B cell (primary cell): ENCODE measurements at regions of chr12 and their contacts with region 1.

Region 1: GRCh38 chr12:67441736-67442346 is 172.7 kb downstream of the CAND1 start:
- DNase-seq: peak; percentile 76
- ATAC-seq: peak; percentile 88
- H3K4me3 ChIP-seq: no peak overlapping the region
- H3K4me3 Mint-ChIP-seq: peak overlapping the region; percentile 18
- H3K27ac ChIP-seq: no peak overlapping the region
- H3K27ac Mint-ChIP-seq: no peak overlapping the region
- H3K4me1 ChIP-seq: peaks cover 7 to 8% of the 10 kb centered on the region in 2 donors
- H3K4me1 Mint-ChIP-seq: peaks cover 8% of the 10 kb centered on the region
- H3K27me3 ChIP-seq: no peaks in the 10 kb centered on the region
- H3K27me3 Mint-ChIP-seq: no peaks in the 10 kb centered on the region
- CTCF ChIP-seq: peak; percentile 83

Region 2: GRCh38 chr12:67268896-67269631 is 172.8 kb before region 1 on chr12 and contains the start of gene CAND1:
- CTCF ChIA-PET with region 1: no interaction called
- POLR2A ChIA-PET with region 1: no interaction called
- intact Hi-C with region 1: loop called (anchors 10 kb)
- DNase-seq: peak; percentile 99
- ATAC-seq: peak; percentile 78
- H3K4me3 ChIP-seq: peak within 1 kb of the TSS; percentile 67 to 94 (median 80)
- H3K4me3 Mint-ChIP-seq: peak within 1 kb of the TSS; percentile 86
- H3K27ac ChIP-seq: peak within 1 kb of the TSS; percentile 90 to 94
- H3K27ac Mint-ChIP-seq: peak within 1 kb of the TSS; percentile 91
- H3K4me1 ChIP-seq: peaks cover 24 to 25% of the 10 kb centered on the region in 2 donors
- H3K4me1 Mint-ChIP-seq: peaks cover 34% of the 10 kb centered on the region
- H3K27me3 ChIP-seq: no peaks in the 10 kb centered on the region
- H3K27me3 Mint-ChIP-seq: no peaks in the 10 kb centered on the region
- CTCF ChIP-seq: no peak
- total RNA-seq, gene CAND1: 108 and 110 TPM in 2 replicates

Region 3: GRCh38 chr12:67457778-67458177 is 15.9 kb after region 1 on chr12:
- CTCF ChIA-PET with region 1: no interaction called
- POLR2A ChIA-PET with region 1: no interaction called
- intact Hi-C with region 1: no loop called
- DNase-seq: no peak
- ATAC-seq: no peak
- H3K4me3 ChIP-seq: no peak overlapping the region
- H3K4me3 Mint-ChIP-seq: no peak overlapping the region
- H3K27ac ChIP-seq: no peak overlapping the region
- H3K27ac Mint-ChIP-seq: no peak overlapping the region
- H3K4me1 ChIP-seq: no peaks in the 10 kb centered on the region
- H3K4me1 Mint-ChIP-seq: peaks cover 5% of the 10 kb centered on the region
- H3K27me3 ChIP-seq: peaks cover 0 to 2% (median 0%) of the 10 kb centered on the region in 4 experiments
- H3K27me3 Mint-ChIP-seq: peaks cover 19% of the 10 kb centered on the region
- CTCF ChIP-seq: no peak